RWPE1 (cell line): ENCODE measurements at regions of chr2 and their contacts with region 1.

Region 1: GRCh38 chr2:218269899-218270720 is at the starts of genes AAMP and PNKD:
- DNase-seq: peak; percentile 99
- H3K27ac ChIP-seq: peak within 1 kb of the TSS; percentile 88
- CTCF ChIP-seq: no peak; the same call in 1 of the 2 replicates

Region 2: GRCh38 chr2:218429571-218430301 is 159.6 kb after region 1 on chr2:
- CTCF ChIA-PET with region 1: no interaction called
- POLR2A ChIA-PET with region 1: interaction called, 14 read pairs
- DNase-seq: no peak
- H3K27ac ChIP-seq: no peak overlapping the region
- CTCF ChIP-seq: no peak

Region 3: DNA sequence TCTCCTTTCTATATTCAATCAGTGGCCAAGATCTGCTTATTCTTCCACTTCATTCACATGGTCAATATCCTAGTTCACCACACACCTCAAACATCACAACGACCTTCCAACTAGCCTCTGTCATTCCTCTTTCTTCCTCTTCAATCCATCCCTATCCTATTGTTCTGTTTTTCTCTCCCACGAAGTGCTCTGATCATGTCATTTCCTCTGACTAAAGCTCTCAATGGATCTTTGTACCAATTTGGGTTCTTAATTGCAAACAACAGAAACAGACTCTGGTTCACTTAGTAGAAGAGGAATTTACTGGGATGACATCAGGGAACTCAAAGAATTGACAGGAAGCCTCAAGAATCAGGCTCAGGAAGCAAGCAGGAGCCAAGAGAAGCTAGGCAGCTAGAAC is 634.1 kb after region 1 on chr2:
- CTCF ChIA-PET with region 1: no interaction called
- POLR2A ChIA-PET with region 1: no interaction called
- DNase-seq: no peak
- H3K27ac ChIP-seq: no peak overlapping the region
- CTCF ChIP-seq: no peak